ENCODE measurements at regions of chr7 and their contacts with region 1.

Region 1: GRCh38 chr7:77657427-77658224 is 38.6 kb upstream of the RSBN1L start:
- DNase-seq: no peak
- ATAC-seq: no peak
- H3K4me3 ChIP-seq: no peak overlapping the region
- H3K27ac ChIP-seq: no peak overlapping the region
- H3K4me1 ChIP-seq: no peaks in the 10 kb centered on the region
- H3K27me3 ChIP-seq: no peaks in the 10 kb centered on the region
- CTCF ChIP-seq: peak in 8 of 9 donors; percentile 26 to 60 (median 53)

Region 2: DNA sequence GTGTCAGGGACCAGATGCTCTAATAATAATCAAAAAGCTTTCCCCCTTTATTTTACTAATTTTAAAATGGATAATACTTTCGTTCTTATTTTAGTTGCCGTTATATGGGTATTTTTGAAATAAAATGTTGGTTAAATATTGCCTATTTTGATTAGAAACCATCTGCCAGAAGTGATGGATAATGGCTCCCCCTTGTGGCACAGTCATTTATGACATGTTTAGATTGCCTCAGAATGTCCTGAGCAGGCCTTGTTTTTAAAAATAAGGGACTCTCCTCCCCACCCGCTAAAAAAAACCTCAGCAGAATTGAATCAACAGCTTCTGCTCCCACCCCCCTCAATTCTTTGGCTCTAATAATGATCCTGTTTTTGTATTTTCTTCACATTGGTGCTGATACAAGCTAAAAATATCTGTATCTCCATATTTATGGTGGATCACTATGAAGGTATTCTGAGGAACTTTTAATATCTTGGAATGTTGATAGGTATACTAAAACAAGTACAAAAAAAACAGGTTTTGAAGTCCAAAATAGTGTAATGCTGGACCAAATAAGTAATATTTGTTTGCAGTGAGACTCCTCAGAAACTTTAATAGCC is 101.8 kb after region 1 on chr7:
- intact Hi-C with region 1: loop called in 8 of 10 experiments (anchors 2 to 5 kb)
- DNase-seq: peak in 1 of 2 donors; percentile 73
- ATAC-seq: peak in 6 of 8 donors; percentile 33 to 84 (median 76)
- H3K4me3 ChIP-seq: no peak overlapping the region
- H3K27ac ChIP-seq: peak overlapping the region in 1 of 10 donors; percentile 13
- H3K4me1 ChIP-seq: peaks cover 0 to 23% (median 15%) of the 10 kb centered on the region in 9 donors
- H3K27me3 ChIP-seq: no peaks in the 10 kb centered on the region
- CTCF ChIP-seq: peak; percentile 67 to 89 (median 84)

Region 3: DNA sequence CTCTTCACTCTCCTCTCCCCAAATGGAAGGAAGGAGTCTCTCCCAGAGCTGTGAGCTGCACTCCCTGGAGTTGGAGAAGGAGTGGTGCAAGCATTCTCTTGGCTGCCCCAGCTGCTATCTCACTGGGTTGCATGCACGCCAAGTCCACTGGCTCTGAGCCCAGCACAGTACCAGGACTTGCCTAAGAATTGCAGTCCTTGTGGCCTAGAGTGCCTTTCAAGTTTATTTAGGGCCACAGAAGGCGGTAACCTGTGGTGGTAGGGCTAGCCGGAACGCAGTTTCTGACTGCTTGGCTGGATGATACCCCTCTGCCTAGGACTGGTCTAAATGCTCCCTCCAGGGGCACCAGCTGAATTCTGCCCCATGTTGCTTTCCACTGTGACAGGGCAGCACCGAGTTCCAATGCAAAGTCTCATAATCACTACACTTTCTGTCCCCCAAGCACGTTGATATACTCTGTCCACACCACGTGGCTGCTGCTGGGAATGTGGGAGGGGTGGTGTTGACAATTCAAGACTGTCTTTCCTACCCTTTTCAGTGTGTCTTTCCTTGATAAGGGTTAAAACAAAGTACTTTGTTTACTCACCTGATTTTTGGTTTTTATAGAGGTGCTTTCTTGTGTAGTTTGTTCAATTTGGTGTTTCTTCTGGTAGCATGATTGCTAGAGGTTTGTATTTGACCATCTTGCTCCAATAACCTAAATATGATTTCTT is 197.9 kb after region 1 on chr7:
- intact Hi-C with region 1: no loop called
- DNase-seq: peak; percentile 46 to 70
- ATAC-seq: peak in 7 of 8 donors; percentile 34 to 94 (median 88)
- H3K4me3 ChIP-seq: no peak overlapping the region
- H3K27ac ChIP-seq: no peak overlapping the region
- H3K4me1 ChIP-seq: peaks cover 0 to 16% (median 0%) of the 10 kb centered on the region in 9 donors
- H3K27me3 ChIP-seq: no peaks in the 10 kb centered on the region
- CTCF ChIP-seq: no peak

Region 4: GRCh38 chr7:77910124-77910523 is 252.5 kb after region 1 on chr7:
- intact Hi-C with region 1: loop called in 1 of 10 experiments (anchors 10 kb)
- DNase-seq: no peak
- ATAC-seq: no peak
- H3K4me3 ChIP-seq: no peak overlapping the region
- H3K27ac ChIP-seq: no peak overlapping the region
- H3K4me1 ChIP-seq: peaks cover 0 to 10% (median 0%) of the 10 kb centered on the region in 9 donors
- H3K27me3 ChIP-seq: no peaks in the 10 kb centered on the region
- CTCF ChIP-seq: peak in 3 of 9 donors; percentile 9 to 17 (median 13)

Measured in heart right ventricle (tissue), 16 donors.